WTC11 (cell line): ENCODE measurements at regions of chr2 and their contacts with region 1.

Region 1: DNA sequence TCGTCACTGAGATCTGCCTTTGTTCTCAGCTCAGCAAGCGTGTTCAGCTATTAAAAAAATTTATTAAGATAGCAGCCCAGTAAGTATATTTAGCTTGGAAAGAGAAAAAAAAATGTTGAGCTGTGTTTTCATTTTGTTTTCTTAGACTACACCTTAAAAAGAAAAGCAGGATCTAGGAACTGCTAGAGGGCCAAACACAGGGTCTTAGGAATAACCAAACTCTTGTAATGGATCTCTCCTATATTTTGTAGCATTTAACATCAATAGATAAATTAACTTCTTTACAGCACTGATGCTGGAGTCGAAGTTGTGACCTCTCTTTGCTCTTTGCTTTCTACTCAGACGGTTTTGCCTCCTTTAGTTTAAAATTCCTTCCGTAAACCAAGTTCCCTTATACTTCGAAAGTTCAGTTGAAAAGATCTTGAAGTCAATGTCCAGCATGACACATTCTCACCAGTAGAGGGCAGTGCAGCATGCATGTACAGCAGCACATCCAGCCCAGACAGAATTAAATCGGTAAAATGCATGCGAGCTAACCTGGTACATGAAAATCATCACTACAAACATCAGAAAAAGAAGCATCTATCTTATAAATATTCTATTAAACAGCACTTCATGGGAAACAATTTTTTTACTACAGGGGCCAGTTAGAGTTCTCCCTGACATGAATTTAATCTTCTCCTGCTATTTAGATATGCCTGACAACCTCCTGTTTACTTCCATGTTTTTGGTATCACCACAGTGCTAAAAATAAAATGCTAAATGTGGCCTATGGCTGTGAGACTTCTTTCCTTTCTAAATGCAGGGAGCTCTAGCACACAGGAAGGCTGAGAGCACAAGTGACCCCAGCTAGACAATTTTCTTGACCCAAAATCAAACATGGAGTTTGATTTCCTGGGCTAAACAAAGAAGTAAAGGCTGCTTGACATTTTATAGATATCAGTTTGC is 48.2 kb upstream of the MAP3K20 start:
- DNase-seq: peak; percentile 88
- ATAC-seq: peak; percentile 81
- H3K4me3 Mint-ChIP-seq: no peak overlapping the region
- H3K27ac Mint-ChIP-seq: peak overlapping the region; percentile 3; the same call in 1 of the 2 replicates
- H3K4me1 Mint-ChIP-seq: peaks cover 11% of the 10 kb centered on the region; the same call in 1 of the 2 replicates
- H3K27me3 Mint-ChIP-seq: no peaks in the 10 kb centered on the region
- CTCF ChIP-seq: peak; percentile 83

Region 2: DNA sequence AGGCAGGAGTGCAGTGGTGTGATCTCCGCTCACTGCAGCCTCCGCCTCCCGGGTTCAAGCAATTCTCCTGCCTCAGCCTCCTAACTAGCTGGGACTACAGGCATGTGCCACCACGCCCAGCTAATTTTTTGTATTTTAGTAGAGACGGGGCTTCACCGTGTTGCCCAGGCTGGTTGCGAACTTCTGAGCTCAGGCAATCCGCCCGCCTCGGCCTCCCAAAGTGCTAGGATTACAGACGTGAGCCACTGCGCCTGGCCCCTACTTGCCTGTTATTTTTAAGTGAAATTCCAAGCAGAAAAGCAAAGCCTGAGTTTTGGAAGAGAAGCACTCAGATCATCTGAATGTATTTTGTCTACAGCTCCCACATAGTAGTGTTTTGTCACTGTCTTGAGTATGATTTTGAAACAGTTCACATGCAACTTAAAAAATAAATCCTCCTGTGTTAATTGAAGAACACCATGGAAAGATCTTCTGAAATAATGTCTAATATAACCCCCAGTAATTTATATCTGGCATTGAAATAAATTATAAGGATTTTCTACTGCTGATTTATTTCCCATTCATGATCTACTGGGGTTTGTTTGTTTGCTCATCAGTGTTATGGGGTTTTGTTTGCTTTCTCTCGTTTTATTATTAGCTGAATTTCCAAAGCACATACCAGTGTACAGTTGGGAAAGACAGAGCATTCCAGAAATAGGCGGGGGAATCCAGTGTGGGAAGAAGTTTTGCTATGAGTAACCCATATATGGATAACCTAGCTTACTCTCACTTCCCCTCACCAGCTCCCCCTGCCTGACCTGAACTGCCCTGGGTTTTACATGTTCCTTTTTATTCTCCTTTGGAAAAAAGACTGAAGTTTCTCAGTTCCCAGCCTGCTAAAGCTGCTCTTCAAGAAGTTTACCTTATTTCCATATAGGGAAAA is 31.9 kb before region 1 on chr2:
- CTCF ChIA-PET with region 1: interaction called, 12 read pairs
- POLR2A ChIA-PET with region 1: no interaction called
- DNase-seq: no peak
- ATAC-seq: peak; percentile 72
- H3K4me3 Mint-ChIP-seq: no peak overlapping the region
- H3K27ac Mint-ChIP-seq: no peak overlapping the region
- H3K4me1 Mint-ChIP-seq: peaks cover 14% of the 10 kb centered on the region
- H3K27me3 Mint-ChIP-seq: no peaks in the 10 kb centered on the region
- CTCF ChIP-seq: no peak

Region 3: DNA sequence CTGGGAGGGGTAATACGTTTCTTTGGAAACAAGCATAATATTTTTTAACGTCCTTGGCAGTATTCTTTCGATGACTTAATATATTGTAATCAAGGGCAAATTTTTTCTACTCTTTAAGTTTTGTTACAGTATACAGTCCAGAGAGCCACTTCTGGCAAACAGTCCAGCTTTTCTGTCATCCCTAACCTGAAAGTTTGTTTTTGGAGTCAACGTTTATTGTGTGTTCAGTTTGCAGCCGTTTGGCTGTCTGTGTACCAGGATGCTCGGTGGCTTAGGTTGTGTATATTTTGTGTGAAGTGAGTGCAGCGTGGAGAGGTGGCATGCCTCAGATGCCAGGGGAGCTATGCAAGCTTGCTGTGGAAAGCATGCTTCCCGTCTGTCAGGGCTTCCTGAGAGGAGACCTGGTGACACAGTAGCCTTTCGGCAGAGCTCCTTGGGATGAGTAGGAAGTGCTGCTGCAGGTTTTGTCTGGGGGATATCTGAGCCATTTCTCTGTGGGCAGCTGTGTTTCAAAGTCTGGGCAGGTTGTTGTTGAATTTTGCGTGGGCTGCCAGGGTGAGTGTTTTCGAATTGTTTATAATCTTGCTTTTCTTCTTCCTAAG is 62.9 kb after region 1 on chr2:
- CTCF ChIA-PET with region 1: interaction called, 13 read pairs
- POLR2A ChIA-PET with region 1: no interaction called
- DNase-seq: no peak
- ATAC-seq: no peak
- H3K4me3 Mint-ChIP-seq: no peak overlapping the region
- H3K27ac Mint-ChIP-seq: peak overlapping the region; percentile 11; the same call in 1 of the 2 replicates
- H3K4me1 Mint-ChIP-seq: peaks cover 30% of the 10 kb centered on the region
- H3K27me3 Mint-ChIP-seq: no peaks in the 10 kb centered on the region
- CTCF ChIP-seq: no peak

Region 4: DNA sequence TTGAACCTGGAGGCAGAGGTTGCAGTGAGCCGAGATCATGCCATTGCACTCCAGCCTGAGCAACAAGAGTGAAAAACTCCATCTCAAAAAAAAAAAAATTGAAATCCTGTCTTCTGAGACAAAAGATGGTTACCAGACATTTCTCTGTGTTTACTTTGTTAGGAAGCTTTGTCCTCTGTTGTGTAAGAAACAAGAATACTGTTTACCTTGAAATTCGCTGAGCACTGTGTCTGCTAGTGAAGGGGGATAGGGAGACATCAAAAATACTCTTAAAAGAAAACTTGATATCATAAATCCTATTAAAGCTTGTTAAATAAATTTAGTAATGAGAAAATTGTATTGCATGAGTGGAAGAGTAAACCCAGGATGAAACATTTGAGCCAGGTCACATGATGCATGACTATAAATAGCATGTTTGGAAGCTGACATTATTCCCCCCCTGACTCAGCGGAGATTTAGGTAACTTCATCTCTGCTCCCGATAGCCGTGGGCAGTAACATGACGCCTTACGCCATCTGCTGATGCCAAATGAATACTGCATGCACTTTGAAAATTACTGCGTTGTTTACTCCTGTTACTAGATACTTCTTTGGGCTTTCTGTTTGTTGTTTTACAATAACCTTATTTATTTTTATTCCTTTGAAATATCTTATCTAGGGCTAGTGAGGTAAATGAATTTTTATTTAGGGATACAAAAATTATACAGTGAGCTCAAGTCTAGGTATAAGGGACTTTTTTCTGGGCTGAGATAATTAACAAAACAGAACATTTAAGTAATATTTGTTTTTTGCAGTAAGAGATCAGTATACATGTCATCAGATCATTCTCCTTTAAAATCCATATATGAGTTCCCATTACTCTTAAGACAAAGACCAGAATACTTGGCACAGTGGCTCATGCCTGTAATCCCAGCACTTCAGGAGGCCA is 183.1 kb after region 1 on chr2:
- CTCF ChIA-PET with region 1: interaction called, 23 read pairs
- POLR2A ChIA-PET with region 1: no interaction called
- DNase-seq: peak; percentile 58
- ATAC-seq: peak; percentile 89
- H3K4me3 Mint-ChIP-seq: no peak overlapping the region
- H3K27ac Mint-ChIP-seq: no peak overlapping the region
- H3K4me1 Mint-ChIP-seq: peaks cover 9% of the 10 kb centered on the region
- H3K27me3 Mint-ChIP-seq: no peaks in the 10 kb centered on the region
- CTCF ChIP-seq: peak; percentile 60

Region 5: DNA sequence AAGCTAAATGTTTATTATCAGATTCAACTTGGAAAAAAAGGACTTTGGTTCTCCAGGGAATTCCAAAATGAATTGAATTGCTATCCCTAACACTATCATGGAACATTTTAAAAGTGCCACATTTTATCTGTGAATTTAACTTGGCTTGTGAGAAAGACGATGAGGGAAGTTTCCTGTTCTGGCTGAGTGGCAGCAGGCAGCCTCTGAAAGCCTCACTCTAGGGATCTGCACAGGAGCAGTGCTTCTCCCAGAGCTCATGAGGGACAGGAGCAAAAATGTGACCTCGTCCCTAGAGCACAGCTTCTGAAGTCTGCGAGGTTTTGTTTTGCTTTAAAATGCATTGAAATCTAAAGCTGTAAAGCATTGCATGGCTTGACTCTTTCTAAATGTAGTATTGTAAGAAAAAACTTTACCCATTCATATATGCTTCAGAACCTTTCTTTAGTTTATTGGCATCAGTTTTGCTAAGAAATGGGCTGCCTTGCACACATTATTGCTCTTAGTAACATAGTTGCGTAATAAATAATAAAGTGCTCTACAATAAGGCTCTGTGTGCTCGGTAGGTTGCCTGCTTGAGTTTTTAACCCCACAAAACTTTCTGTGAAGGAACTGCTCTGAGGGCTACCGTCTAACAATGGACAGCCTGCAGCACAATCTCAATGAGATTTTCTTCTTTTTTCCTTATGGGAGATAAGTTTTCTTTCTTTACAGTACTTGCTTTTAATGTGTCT is 191.0 kb after region 1 on chr2:
- CTCF ChIA-PET with region 1: interaction called, 12 read pairs
- POLR2A ChIA-PET with region 1: no interaction called
- DNase-seq: no peak
- ATAC-seq: peak; percentile 93
- H3K4me3 Mint-ChIP-seq: no peak overlapping the region
- H3K27ac Mint-ChIP-seq: peak overlapping the region; percentile 40
- H3K4me1 Mint-ChIP-seq: peaks cover 20% of the 10 kb centered on the region
- H3K27me3 Mint-ChIP-seq: no peaks in the 10 kb centered on the region
- CTCF ChIP-seq: no peak

Region 6: DNA sequence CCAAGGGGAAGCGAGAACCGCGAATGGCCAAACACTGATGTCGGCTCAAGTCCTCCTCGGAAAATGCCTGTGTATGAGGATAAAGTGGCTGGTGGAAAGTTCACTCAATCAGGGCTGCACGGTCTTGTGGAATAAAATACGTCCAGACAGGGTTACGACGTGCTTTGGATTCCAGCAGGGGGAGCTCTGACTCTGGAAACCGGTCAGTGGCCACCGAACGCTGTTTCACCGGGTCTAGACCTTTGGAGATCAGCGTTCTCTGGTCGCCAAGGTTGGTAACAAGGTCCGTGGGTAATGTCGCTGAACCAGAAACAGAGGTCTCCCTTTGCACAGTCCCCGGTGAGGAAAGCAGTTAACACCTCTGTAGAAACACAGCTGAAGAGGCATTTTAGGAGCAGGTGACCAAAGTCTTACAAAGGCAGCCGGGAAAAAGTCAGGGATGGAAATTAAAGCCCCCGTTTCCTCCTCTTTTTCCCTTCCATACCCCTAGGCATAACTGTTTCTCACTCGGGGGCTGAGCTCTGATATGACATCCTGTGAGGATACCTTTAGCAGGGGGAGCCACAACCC is 375.0 kb after region 1 on chr2:
- CTCF ChIA-PET with region 1: interaction called, 12 read pairs
- POLR2A ChIA-PET with region 1: no interaction called
- DNase-seq: peak; percentile 84
- ATAC-seq: peak; percentile 92
- H3K4me3 Mint-ChIP-seq: peak overlapping the region; percentile 72
- H3K27ac Mint-ChIP-seq: no peak overlapping the region
- H3K4me1 Mint-ChIP-seq: peaks cover 33% of the 10 kb centered on the region
- H3K27me3 Mint-ChIP-seq: peaks cover 3% of the 10 kb centered on the region
- CTCF ChIP-seq: peak; percentile 76